ENCODE measurements at regions of chr3 and their contacts with region 1.

Region 1: GRCh38 chr3:124761250-124761796 is 31.1 kb downstream of the UMPS start:
- DNase-seq: peak; percentile 75
- H3K4me3 ChIP-seq: no peak overlapping the region
- CTCF ChIP-seq: peak; percentile 95

Region 2: DNA sequence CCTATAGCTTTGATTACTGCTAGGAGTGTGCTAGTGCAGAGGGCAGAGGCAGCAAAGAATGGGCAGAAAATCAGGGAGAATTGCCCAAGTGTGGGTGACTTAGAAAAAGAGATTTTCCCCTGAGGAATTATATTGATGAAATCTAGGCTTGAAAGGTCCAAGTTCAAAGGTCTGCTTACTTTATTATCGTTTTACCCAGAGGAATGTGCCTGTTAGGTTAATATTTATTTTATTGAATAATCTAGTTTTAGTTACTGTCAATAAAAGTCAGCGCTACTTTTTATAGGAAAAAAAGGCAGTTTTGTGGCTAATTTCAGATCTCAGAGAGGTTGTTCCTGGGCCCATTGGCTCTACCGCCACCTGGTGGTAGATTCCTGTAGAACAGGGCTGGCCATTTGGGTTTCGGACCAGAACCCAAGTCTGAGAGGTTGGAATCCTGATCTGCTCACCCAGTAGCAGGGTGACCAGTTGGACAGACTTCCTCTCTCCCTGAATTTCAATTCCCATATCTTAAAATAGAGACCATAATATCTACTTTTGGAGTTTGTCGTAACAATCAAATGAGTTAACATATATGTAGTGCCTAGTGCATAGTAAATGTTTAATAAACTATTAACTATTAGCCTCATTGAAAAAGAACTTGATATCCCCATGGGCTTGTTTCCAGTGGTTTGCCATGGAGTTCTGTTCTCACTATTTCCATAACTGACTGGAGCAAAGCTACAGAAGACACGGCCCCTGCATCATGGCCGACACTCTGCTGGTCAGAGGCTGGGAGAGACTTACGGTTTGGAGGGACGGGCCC is 676.5 kb after region 1 on chr3:
- in situ Hi-C with region 1: loop called (anchors 25 kb)
- DNase-seq: peak; percentile 19
- H3K4me3 ChIP-seq: no peak overlapping the region
- CTCF ChIP-seq: peak; percentile 97

Region 3: DNA sequence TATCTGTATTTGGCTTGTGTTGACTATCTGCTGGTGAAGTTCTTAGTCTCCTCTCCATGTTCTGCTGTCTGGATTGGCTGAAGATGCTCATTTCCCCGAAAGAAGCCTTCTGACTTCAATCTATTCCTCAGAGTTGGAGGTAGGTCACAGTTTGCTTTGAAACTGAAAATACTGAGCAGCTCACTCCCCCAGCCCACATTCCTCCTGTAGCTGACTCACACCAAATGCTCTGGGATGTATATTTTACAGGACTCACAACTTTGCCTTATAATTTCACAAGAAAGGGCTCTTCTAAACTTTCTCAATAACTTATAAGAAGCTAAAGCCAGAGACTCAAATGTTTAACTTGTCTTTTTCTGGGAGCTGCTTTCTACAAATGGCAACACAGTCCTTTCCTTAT is 795.0 kb after region 1 on chr3:
- in situ Hi-C with region 1: loop called (anchors 25 kb)
- DNase-seq: peak; percentile 3
- H3K4me3 ChIP-seq: no peak overlapping the region
- CTCF ChIP-seq: no peak